ENCODE measurements at regions of chr13 and their contacts with region 1.

Region 1: DNA sequence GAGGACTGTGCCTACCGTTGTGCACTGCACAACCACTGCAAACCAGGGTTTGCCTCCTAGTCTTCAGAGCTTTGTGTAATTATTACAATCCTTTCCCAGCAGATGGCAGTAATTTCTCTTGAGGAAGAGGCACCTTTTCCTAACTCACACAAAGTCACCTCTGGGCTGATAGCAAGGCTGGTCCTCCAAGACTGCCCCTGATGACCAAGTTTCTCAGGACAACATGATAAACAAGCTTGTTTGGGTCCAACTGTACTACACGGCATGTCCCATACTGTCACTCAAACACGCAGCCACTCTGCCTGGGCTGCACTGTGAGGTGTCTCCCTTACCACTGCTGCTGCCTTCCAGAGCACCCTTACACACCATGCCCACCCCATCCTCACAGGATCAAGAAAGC is 39.3 kb downstream of the RFXAP start:
- DNase-seq: peak; percentile 12
- ATAC-seq: peak; percentile 86
- H3K4me3 ChIP-seq: no peak overlapping the region
- H3K27ac ChIP-seq: no peak overlapping the region
- H3K4me1 ChIP-seq: no peaks in the 10 kb centered on the region
- H3K27me3 ChIP-seq: no peaks in the 10 kb centered on the region
- CTCF ChIP-seq: peak; percentile 68

Region 2: GRCh38 chr13:36981156-36981743 is 123.0 kb after region 1 on chr13:
- CTCF ChIA-PET with region 1: no interaction called
- POLR2A ChIA-PET with region 1: no interaction called
- in situ Hi-C with region 1: no loop called
- intact Hi-C with region 1: loop called (anchors 2 kb)
- DNase-seq: no peak
- ATAC-seq: no peak
- H3K4me3 ChIP-seq: no peak overlapping the region
- H3K27ac ChIP-seq: no peak overlapping the region
- H3K4me1 ChIP-seq: no peaks in the 10 kb centered on the region
- H3K27me3 ChIP-seq: no peaks in the 10 kb centered on the region
- CTCF ChIP-seq: peak; percentile 21; the same call in 1 of the 2 replicates

Measured in Panc1 (cell line).